ENCODE measurements at regions of chr2 and their contacts with region 1.

Region 1: GRCh38 chr2:120596191-120596811 is 139.4 kb upstream of the GLI2 start:
- DNase-seq: no peak
- H3K4me3 ChIP-seq: no peak overlapping the region
- H3K27ac ChIP-seq: no peak overlapping the region
- H3K27me3 ChIP-seq: peaks cover 5% of the 10 kb centered on the region
- CTCF ChIP-seq: no peak

Region 2: GRCh38 chr2:120235681-120236080 is 360.6 kb before region 1 on chr2:
- CTCF ChIA-PET with region 1: interaction called, 10 read pairs
- POLR2A ChIA-PET with region 1: no interaction called
- DNase-seq: no peak
- H3K4me3 ChIP-seq: no peak overlapping the region
- H3K27ac ChIP-seq: no peak overlapping the region
- H3K27me3 ChIP-seq: no peaks in the 10 kb centered on the region
- CTCF ChIP-seq: no peak

Region 3: DNA sequence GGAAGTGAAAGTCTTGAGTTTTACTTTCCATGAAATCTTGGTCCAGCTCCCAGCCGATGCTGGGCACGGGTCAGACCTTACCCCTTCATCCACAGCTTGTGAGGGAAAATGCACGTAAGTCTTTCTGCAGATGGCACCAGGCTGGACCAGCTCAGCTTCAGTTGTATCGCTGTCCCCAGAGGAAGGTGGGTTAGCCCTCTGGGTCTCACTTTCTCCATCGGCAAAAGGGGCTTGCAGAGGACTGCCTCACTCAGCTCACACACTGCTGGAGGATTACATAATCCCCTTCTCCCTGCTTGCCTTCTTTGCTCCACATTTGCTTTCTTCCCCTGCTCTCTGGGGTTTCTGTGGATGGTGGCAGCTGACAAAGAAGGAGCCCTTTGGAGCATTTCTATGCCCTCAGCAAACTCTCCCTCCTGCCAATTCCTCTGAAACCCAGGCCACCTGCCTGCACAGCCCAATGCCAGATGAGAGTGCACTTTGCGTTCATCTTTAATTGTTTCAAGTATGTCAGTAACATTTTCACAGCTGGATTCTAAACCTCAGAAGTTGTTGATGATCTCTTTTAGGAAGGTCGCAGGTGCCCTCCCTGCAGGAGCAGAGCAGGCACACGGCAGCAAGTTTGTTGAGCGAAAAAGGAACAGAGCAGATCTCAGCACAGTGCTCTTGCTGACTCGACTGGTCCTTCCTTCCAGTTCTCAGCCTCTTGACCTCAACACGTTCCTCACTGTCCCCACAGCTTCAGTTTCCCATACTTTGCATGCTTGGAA is 16.2 kb before region 1 on chr2:
- CTCF ChIA-PET with region 1: no interaction called
- POLR2A ChIA-PET with region 1: no interaction called
- DNase-seq: no peak
- H3K4me3 ChIP-seq: no peak overlapping the region
- H3K27ac ChIP-seq: no peak overlapping the region
- H3K27me3 ChIP-seq: peaks cover 41% of the 10 kb centered on the region
- CTCF ChIP-seq: no peak

Measured in AG04450 (cell line).